Activated CD8-positive, alpha-beta T cell treated with anti-CD3 and anti-CD28 coated beads, Interleukin-2, amount 10 ng/mL, durations not matched to agents 7 days and 5 days (primary cell): ENCODE measurements at regions of chr2 and their contacts with region 1.

Region 1: DNA sequence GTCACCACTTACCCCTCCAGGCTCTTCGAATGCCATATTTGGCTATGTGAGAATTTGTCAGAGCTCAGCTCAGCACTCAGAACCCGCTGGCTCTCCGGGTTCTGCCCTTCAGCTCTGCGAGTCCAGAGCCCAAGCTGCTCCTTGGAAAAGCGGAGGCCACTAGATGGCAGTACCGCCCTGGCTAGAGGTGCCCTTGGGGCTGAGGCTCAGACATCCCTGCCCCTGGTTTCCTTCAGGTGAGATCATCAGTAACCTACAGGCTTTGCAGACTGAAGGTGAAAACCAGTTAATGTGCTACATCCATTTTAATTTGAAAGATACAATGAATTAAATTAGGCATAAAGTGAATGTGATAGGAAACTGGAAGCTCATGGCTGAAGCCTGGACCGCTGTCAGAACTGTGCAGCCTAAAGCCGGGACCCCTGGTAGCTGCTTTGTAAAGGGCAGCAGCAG is 285.6 kb downstream of the AGAP1 start:
- DNase-seq: peak; percentile 73
- ATAC-seq: peak; percentile 74
- H3K4me3 Mint-ChIP-seq: no peak overlapping the region
- H3K27ac Mint-ChIP-seq: no peak overlapping the region
- H3K4me1 Mint-ChIP-seq: no peaks in the 10 kb centered on the region
- H3K27me3 Mint-ChIP-seq: peaks cover 3% of the 10 kb centered on the region

Region 2: GRCh38 chr2:235766278-235766677 is 13.2 kb before region 1 on chr2:
- CTCF ChIA-PET with region 1: interaction called, 19 read pairs
- POLR2A ChIA-PET with region 1: no interaction called
- DNase-seq: peak; percentile 61
- ATAC-seq: peak; percentile 84
- H3K4me3 Mint-ChIP-seq: no peak overlapping the region
- H3K27ac Mint-ChIP-seq: no peak overlapping the region
- H3K4me1 Mint-ChIP-seq: no peaks in the 10 kb centered on the region
- H3K27me3 Mint-ChIP-seq: no peaks in the 10 kb centered on the region

Region 3: GRCh38 chr2:235789552-235789951 is 10.1 kb after region 1 on chr2:
- CTCF ChIA-PET with region 1: interaction called, 17 read pairs
- POLR2A ChIA-PET with region 1: no interaction called
- DNase-seq: no peak
- ATAC-seq: no peak
- H3K4me3 Mint-ChIP-seq: no peak overlapping the region
- H3K27ac Mint-ChIP-seq: no peak overlapping the region
- H3K4me1 Mint-ChIP-seq: no peaks in the 10 kb centered on the region
- H3K27me3 Mint-ChIP-seq: no peaks in the 10 kb centered on the region

Region 4: DNA sequence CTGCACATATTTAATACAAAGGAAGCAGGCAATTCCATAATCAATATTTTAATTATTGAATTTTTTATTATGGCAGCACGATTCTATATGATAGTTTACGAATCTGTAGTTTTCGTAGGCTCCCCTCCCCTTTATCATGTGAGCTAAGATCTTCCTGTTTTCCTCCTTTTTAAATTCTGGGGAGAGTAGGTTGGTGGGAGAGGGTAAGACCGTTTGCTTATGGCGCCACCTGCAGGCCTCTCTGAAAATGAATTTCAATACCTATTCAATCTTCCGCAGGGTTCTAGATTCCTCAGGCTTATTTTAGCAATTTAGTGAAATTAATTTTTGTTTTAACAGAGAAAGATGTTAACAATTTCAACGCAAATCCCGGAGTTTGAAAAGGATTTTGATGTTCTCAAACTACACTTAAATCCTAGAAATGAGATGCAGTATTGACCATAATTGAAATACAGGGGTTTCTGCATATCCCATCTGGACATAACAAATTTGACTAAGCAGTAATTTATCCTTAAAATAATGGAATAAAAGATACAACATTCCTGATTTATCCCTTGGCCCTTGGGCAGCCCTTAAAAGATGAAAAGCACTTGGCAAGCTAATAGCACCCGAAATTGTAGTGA is 401.5 kb after region 1 on chr2:
- CTCF ChIA-PET with region 1: interaction called, 48 read pairs
- POLR2A ChIA-PET with region 1: interaction called, 3 read pairs
- DNase-seq: peak; percentile 52
- ATAC-seq: no peak
- H3K4me3 Mint-ChIP-seq: no peak overlapping the region
- H3K27ac Mint-ChIP-seq: no peak overlapping the region
- H3K4me1 Mint-ChIP-seq: peaks cover 4% of the 10 kb centered on the region
- H3K27me3 Mint-ChIP-seq: peaks cover 35% of the 10 kb centered on the region